ENCODE measurements at regions of chr2 and their contacts with region 1.

Region 1: DNA sequence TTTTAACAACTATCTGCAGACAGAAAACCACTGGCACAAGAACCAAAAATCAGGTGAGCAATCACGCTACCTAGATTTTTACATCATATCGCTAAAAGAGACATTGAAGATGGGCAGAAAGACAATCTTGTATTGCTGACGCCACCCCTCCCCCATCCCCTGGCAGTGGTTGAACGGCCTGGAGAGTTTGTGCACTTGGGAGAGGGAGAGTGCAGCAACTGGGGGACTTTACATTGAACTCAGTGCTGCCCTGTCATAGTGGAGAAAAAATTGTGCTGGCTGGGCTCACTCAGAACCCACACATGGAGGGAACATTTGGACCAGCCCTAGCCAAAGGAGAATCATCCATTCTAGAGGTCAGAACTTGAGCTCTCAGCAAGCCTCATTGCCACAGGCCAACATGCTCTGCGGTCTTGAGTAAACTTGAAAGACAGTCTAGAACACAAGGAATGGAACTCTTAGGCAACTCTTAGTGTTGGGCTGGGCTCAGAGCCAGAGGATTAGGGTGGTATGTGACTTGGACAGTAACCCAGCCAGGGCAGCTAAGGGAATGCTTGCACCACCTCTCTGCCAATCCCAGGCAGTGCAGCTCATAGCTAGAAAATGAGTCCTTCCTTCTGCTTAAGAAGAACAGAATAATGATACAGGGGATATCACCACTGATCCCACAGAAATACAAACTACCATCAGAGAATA is 220.0 kb upstream of the CYP26B1 start:
- DNase-seq: peak; percentile 100
- H3K4me3 Mint-ChIP-seq: peak overlapping the region; percentile 25
- H3K27ac Mint-ChIP-seq: no peak overlapping the region
- H3K4me1 Mint-ChIP-seq: peaks cover 21% of the 10 kb centered on the region
- H3K27me3 Mint-ChIP-seq: no peaks in the 10 kb centered on the region
- CTCF ChIP-seq: peak; percentile 58

Region 2: DNA sequence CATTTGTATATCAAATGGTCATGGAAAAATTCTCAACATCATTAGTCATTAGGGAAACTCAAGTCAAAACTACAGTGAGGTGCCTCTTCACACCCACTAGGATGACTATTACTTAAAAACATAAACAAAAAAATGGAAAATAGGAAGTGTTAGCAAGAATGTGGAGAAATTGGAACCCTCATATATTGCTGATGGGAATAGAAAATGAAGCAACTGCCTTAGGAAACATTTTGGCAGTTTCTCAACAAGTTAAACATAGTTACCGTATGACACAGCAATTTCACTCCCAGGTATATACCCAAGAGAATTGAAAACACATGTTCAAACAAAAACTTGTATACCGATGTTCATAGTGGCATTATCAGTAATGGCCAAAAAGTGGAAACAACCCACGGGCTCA is 201.9 kb before region 1 on chr2:
- CTCF ChIA-PET with region 1: no interaction called
- POLR2A ChIA-PET with region 1: no interaction called
- intact Hi-C with region 1: loop called (anchors 5 kb)
- DNase-seq: peak; percentile 83
- H3K4me3 Mint-ChIP-seq: no peak overlapping the region
- H3K27ac Mint-ChIP-seq: peak overlapping the region; percentile 59
- H3K4me1 Mint-ChIP-seq: peaks cover 20% of the 10 kb centered on the region
- H3K27me3 Mint-ChIP-seq: no peaks in the 10 kb centered on the region
- CTCF ChIP-seq: no peak

Region 3: DNA sequence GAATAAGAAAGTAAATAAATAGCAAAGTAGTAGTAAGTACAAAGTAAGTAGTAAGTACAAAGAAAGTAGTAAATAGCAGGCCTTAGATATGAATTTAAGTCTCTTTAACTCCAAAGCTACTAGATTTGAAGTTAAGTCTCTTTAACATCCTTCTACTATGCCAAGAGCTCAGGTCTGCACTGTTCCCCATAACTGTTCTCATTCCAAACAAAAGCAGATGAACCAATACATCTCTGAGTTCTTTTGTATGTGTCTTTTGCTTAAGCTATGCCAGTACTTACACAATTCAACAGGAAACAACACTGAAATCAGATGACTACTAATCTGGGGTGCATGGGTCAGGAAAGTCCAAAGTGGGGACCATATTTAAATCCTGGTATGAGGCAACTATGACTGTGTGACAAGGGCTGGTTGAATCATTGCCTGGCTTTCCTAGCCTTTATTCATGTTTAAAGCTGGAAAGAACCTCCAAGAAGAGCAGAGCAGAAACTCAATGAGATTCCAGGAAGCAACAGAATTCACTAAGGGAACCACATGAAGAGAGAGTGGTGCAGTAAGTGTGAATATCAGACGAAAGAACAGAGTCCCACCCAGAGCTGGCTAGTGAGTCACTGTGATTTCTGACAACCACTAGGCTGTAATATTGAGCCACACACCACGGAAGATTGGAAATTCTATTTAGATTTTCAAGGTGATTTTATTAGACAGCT is 169.0 kb before region 1 on chr2:
- CTCF ChIA-PET with region 1: no interaction called
- POLR2A ChIA-PET with region 1: interaction called, 9 read pairs
- intact Hi-C with region 1: loop called (anchors 1 kb)
- DNase-seq: peak; percentile 45
- H3K4me3 Mint-ChIP-seq: no peak overlapping the region
- H3K27ac Mint-ChIP-seq: no peak overlapping the region
- H3K4me1 Mint-ChIP-seq: peaks cover 6% of the 10 kb centered on the region
- H3K27me3 Mint-ChIP-seq: no peaks in the 10 kb centered on the region
- CTCF ChIP-seq: no peak

Region 4: DNA sequence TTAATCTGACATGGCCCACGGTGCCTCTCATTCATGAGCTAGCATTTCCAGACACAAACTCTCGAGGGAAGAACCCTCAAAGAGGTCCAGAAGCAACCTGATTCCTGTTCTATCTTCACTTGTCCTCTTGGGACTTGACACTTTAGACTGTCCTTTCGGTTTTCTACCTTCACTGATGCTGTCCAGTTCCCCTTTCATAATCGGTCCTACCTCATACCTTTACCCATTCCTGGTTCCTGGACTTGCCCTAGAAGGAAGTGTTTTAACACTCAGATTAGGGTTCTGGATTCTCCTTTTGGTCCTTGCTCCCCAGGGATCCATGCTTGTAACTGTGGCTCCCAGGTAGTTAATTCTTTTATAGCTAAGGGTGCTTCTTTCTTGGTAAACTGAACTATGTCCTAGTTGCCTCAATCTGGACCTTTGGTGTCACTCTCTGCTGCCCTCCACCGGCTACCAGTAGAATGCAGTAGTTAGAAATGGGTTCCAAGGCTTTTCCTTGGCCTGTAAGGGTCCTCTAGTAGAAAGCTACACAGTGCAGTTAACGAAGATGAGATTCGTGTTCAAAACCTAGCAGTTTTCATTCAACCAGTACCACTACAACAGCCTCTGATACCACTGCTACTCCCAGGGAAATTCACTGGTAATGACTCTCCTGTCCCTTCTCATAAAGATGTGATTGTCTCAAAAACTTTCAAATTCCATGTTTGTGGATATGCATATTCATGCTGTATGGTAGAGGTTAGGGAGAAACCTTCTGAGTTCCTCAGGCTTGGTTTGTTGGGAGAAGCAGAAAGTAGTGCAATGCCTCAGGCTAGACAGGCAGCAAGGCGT is 41.9 kb before region 1 on chr2:
- CTCF ChIA-PET with region 1: interaction called, 6 read pairs
- POLR2A ChIA-PET with region 1: interaction called, 3 read pairs
- intact Hi-C with region 1: loop called (anchors 5 kb)
- DNase-seq: peak; percentile 52
- H3K4me3 Mint-ChIP-seq: no peak overlapping the region
- H3K27ac Mint-ChIP-seq: no peak overlapping the region
- H3K4me1 Mint-ChIP-seq: no peaks in the 10 kb centered on the region
- H3K27me3 Mint-ChIP-seq: no peaks in the 10 kb centered on the region
- CTCF ChIP-seq: peak; percentile 58

Region 5: GRCh38 chr2:72386288-72386687 is 18.6 kb after region 1 on chr2:
- CTCF ChIA-PET with region 1: no interaction called
- POLR2A ChIA-PET with region 1: no interaction called
- intact Hi-C with region 1: no loop called
- DNase-seq: no peak
- H3K4me3 Mint-ChIP-seq: no peak overlapping the region
- H3K27ac Mint-ChIP-seq: no peak overlapping the region
- H3K4me1 Mint-ChIP-seq: no peaks in the 10 kb centered on the region
- H3K27me3 Mint-ChIP-seq: no peaks in the 10 kb centered on the region
- CTCF ChIP-seq: no peak

Region 6: DNA sequence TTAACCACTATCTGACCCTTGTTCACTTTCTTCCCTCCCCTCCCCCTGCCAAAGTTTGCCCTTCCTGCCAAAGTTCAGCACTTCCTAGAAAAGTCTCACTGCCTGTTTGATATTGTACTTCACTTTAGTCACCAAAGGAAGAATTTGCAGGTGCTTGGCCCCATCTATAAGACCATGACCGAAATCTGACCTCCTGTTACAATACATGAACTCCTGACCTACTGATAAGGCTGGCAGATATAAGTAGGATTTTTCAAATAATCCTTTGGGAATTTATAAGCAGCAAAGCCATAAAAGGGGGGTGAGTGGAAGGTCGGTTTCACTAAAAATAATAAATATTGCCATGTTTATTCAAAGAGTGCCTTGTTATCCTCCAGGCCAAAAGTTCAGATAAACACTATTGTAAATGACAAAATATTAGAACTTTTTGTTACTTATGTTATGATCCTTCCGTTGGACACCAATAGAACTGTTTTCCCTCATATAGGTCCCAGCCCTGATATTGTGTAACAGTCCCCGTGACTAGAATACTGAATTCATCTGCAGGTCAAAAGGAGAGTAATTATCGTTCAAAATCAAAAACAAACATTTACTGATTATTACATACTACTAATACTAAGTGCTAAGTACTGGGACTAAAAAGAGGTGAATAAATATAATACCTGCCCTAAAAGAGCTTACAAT is 180.5 kb after region 1 on chr2:
- CTCF ChIA-PET with region 1: no interaction called
- POLR2A ChIA-PET with region 1: no interaction called
- intact Hi-C with region 1: no loop called
- DNase-seq: no peak
- H3K4me3 Mint-ChIP-seq: no peak overlapping the region
- H3K27ac Mint-ChIP-seq: no peak overlapping the region
- H3K4me1 Mint-ChIP-seq: no peaks in the 10 kb centered on the region
- H3K27me3 Mint-ChIP-seq: no peaks in the 10 kb centered on the region
- CTCF ChIP-seq: no peak